ENCODE measurements at regions of chr9 and their contacts with region 1.

Region 1: GRCh38 chr9:6055213-6055612 is 39.8 kb upstream of the RANBP6 start:
- DNase-seq: no peak
- H3K4me3 ChIP-seq: no peak overlapping the region
- H3K27ac ChIP-seq: no peak overlapping the region
- H3K4me1 ChIP-seq: peaks cover 0 to 13% (median 7%) of the 10 kb centered on the region in 6 donors
- H3K27me3 ChIP-seq: no peaks in the 10 kb centered on the region
- CTCF ChIP-seq: peak in 10 of 11 experiments; percentile 21 to 59 (median 42)
- POLR2A ChIP-seq: no peak

Region 2: DNA sequence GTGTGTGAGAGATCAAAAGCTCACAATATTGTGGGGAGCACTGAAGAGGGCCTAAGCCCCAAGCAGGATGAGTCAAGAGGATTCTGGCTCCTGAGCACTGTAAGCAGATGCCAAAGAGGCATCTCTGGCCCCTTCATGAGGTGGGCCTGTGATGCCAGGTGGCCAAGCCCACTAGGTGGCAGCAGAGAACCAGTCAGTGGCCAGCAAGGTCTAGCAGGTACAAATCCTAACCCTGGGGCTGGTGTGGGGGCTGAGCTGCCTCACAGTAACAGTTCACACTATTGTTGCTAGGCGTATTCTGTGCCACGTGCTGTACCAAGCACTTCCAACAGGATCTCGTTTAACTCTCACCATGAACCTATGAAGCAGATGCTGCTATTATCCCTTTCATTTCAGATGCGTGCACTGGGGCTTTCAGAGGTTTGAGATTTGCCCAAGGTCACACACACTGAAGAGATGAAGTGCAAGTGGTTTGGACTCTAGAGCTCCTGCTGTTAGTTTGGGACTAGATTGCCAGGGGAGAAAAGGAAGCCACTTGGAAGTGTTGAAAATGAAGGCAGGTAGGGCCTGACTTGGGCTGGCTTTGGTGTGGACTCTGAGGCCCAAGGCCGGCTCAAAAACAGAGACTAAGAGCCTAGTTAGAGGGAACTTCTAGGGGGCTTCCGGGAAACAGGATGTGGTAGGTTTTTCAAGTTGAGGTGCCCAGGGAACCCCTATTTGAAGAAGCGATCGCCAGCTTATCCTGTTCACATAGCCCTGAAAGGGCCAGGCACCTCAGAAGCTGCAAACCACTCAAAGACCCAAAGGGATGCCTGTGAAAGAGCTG is 168.9 kb before region 1 on chr9:
- intact Hi-C with region 1: loop called (anchors 5 kb)
- DNase-seq: peak; percentile 90
- H3K4me3 ChIP-seq: no peak overlapping the region
- H3K27ac ChIP-seq: no peak overlapping the region
- H3K4me1 ChIP-seq: peaks cover 0 to 7% (median 0%) of the 10 kb centered on the region in 6 donors
- H3K27me3 ChIP-seq: no peaks in the 10 kb centered on the region
- CTCF ChIP-seq: peak; percentile 63 to 93 (median 84)
- POLR2A ChIP-seq: no peak